Breast epithelium (tissue), 4 donors: ENCODE measurements at regions of chr12 and their contacts with region 1.

Region 1: DNA sequence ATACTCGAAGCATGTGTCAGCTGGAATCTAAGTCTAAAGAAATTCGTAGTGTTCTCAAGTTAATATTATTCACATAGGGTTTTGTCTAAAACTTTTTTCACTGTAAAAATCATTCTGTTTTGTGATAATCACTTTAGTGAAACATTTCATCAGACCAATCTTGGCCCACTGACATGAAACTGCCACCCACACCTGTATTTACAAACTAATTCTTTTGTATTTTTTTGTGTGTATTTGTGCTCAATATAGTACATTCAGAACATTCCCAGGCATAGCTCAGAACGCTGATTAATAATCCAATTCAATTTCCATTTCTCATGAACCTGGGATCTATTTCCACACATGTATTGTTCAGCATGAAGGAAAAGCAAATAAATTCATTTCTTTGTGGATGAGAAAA is 191.7 kb downstream of the RASSF9 start:
- DNase-seq: no peak
- H3K4me3 ChIP-seq: no peak overlapping the region
- H3K27ac ChIP-seq: no peak overlapping the region
- H3K4me1 ChIP-seq: no peaks in the 10 kb centered on the region
- H3K27me3 ChIP-seq: no peaks in the 10 kb centered on the region
- CTCF ChIP-seq: no peak
- POLR2A ChIP-seq: no peak

Region 2: DNA sequence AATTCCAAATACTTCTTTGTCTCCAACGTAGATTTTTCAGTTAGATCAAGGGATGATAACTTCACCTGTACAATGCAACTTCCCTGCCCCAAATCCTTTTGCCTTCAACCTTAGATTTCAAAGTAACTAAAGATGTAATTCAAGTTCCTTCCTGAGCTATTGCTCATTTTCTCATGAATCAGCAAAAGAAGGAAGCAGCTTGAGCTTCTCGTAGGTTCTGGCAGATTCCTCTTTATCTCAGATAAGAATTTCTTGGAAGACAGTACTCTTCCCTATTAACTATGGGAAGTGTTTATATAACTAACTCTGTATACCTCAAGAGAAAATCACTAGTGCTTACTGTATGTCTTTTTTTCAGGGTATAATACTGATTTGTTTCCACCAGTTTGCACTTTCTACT is 12.1 kb before region 1 on chr12:
- intact Hi-C with region 1: loop called (anchors 1 kb)
- DNase-seq: no peak
- H3K4me3 ChIP-seq: no peak overlapping the region
- H3K27ac ChIP-seq: no peak overlapping the region
- H3K4me1 ChIP-seq: no peaks in the 10 kb centered on the region
- H3K27me3 ChIP-seq: no peaks in the 10 kb centered on the region
- CTCF ChIP-seq: no peak
- POLR2A ChIP-seq: no peak

Region 3: DNA sequence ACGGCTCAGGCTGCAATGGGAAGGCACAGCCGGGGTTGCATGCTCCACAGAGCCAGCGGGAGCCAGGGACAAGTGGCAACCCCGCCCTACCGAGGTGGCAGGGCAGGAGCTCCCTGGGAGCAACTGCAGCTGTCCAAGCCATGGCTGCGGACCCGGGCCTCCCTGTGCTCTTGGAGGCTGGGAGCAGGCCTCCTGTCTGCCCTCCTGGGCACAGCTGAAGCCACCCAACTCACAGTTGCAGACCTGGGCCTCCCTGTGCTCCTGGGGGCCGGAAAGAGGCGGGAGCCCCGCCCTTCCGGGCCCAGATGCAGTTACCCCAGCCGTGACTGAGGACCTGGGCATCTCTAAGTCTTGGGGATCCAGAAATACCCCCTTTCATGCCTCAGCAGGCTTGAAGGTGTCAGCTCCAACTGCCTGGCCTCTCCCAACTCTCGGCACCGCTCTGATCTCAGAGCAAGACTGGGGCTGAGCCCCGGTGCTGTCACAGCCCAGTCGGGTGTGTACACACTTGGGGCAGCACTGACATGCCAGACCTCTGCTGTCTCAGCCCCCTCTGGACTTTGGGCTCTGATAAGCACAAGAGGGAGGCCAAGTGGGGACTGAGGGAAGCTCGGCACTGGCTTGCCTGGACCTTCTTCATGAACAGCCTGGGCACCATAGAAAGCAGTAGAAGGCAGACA is 199.2 kb after region 1 on chr12:
- intact Hi-C with region 1: no loop called
- DNase-seq: no peak
- H3K4me3 ChIP-seq: no peak overlapping the region
- H3K27ac ChIP-seq: no peak overlapping the region
- H3K4me1 ChIP-seq: no peaks in the 10 kb centered on the region
- H3K27me3 ChIP-seq: no peaks in the 10 kb centered on the region
- CTCF ChIP-seq: no peak
- POLR2A ChIP-seq: no peak